Activated CD4-positive, alpha-beta T cell treated with anti-CD3 and anti-CD28 coated beads for 36 hours (primary cell): ENCODE measurements at regions of chr4 and their contacts with region 1.

Region 1: GRCh38 chr4:146916479-146917076 is 29.1 kb downstream of the TTC29 start:
- DNase-seq: peak; percentile 23
- ATAC-seq: no peak
- H3K4me3 Mint-ChIP-seq: no peak overlapping the region
- H3K27ac Mint-ChIP-seq: no peak overlapping the region
- H3K4me1 Mint-ChIP-seq: no peaks in the 10 kb centered on the region
- H3K27me3 Mint-ChIP-seq: peaks cover 8% of the 10 kb centered on the region

Region 2: DNA sequence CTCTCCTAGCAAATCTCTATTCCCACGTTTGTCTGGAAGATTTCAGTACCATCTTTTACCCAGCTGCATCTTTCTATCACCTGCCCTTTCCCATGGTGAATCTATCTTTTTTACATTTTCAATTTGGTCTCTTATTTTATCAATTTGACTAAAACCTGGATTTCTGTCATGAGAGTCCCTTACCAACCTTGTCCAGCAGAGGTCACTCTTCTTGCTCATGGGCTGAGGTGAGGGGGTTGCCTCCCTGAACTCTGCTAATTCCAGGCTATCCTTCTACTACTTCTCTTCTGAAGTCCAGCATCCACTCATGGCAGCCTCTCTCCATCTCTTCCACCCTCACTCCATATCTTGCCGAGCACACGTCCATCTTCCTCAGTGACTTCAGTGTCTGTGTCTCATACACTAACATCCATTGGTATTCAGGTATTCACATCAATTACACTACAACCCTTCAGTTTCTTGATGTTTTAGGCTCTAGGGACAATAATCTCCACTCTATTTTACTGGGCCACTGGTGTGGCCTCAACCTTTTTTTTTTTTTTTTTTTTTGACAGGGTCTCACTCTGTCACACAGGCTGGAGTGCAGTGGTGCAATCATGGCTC is 960.2 kb before region 1 on chr4:
- CTCF ChIA-PET with region 1: no interaction called
- POLR2A ChIA-PET with region 1: no interaction called
- intact Hi-C with region 1: loop called in 1 of 2 experiments (anchors 5 kb)
- DNase-seq: peak; percentile 53
- ATAC-seq: no peak
- H3K4me3 Mint-ChIP-seq: no peak overlapping the region
- H3K27ac Mint-ChIP-seq: no peak overlapping the region
- H3K4me1 Mint-ChIP-seq: peaks cover 2% of the 10 kb centered on the region
- H3K27me3 Mint-ChIP-seq: peaks cover 7% of the 10 kb centered on the region

Region 3: DNA sequence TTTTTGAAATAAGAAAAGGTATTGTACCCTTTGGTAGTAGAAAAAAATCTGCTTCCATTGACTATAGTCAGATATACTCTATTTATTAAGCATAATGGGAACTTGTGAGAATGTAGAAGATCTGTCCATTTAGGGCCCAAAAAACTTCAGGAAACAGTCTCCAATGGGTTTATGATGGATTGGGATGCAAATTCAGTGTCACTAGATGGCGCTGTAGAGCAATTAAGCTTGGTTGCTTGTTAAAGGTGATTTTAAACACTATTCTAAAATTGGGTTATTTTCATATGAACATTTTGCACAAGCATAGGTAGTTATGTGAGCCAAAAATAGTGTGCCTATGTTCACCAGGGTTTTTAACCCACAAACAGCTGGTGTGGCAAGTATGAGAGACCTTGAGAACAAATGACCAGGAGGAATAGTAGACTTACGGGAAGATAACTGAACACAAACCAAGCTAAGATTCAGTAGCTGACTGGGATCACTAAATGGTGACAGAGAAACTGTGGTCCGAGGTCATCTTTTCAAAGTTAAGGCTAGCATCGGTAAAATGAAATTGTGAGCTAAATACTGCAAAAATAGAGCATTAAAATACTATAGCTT is 821.4 kb before region 1 on chr4:
- CTCF ChIA-PET with region 1: interaction called, 3 read pairs
- POLR2A ChIA-PET with region 1: no interaction called
- intact Hi-C with region 1: loop called in 1 of 2 experiments (anchors 5 kb)
- DNase-seq: peak; percentile 46
- ATAC-seq: no peak
- H3K4me3 Mint-ChIP-seq: no peak overlapping the region
- H3K27ac Mint-ChIP-seq: no peak overlapping the region
- H3K4me1 Mint-ChIP-seq: no peaks in the 10 kb centered on the region
- H3K27me3 Mint-ChIP-seq: peaks cover 7% of the 10 kb centered on the region

Region 4: DNA sequence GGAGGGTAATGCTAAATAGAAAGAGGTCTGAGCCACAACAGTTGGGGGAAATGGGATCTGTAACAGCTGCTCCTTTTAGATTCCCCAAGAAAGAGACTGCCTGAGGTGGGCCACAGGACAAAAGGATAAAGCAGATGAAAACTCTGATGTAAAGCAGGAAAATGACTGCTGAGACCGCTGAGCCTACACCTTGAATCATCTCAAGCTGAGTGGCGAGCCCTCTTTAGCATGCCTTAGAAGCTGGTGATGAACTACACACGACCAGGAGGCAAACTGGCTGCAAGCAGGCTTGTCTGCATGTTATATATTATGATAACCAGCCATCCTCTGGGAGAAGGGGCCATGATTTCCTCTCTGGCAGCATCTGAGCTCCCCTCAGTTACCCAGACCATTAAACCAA is 59.3 kb before region 1 on chr4:
- CTCF ChIA-PET with region 1: no interaction called
- POLR2A ChIA-PET with region 1: no interaction called
- intact Hi-C with region 1: no loop called
- DNase-seq: no peak
- ATAC-seq: no peak
- H3K4me3 Mint-ChIP-seq: no peak overlapping the region
- H3K27ac Mint-ChIP-seq: no peak overlapping the region
- H3K4me1 Mint-ChIP-seq: no peaks in the 10 kb centered on the region
- H3K27me3 Mint-ChIP-seq: peaks cover 15% of the 10 kb centered on the region